ENCODE measurements at regions of chr2 and their contacts with region 1.

Region 1: GRCh38 chr2:38377050-38377828 is at the start of gene ATL2:
- DNase-seq: peak; percentile 98
- H3K4me3 Mint-ChIP-seq: peak within 1 kb of the TSS; percentile 92
- H3K27ac Mint-ChIP-seq: peak within 1 kb of the TSS; percentile 95
- H3K4me1 Mint-ChIP-seq: peaks cover 58% of the 10 kb centered on the region
- H3K27me3 Mint-ChIP-seq: no peaks in the 10 kb centered on the region
- total RNA-seq, gene ATL2: 58.1 and 67.3 TPM in 2 replicates

Region 2: DNA sequence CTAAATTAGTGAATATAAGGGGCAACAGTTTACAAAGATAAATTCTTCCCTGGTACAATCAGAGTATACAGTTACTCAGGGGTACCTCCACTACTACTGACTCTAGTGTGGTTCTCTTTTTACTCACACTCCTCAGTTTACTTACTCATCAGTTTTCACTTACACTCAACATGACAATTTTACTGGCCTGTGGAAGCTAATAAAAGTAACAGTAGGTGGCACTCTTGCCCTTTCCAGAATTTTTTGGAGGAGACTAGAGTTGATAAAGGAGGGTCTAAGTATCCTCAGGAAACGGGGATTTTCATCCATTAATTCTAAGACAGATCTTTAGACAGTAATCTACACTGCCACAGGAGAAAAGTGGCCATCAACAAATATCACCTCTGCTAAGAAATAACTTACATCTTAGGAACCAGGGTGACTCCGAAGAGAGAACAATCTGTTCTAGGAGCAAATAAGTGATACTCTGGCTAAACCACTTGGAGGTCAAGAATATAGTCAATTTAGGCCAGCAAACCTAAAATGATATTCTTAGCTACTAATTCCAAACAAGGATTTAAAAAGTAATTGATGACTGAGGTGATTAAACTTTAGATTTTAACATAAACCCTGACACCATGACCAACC is 61.4 kb before region 1 on chr2:
- intact Hi-C with region 1: loop called (anchors 5 kb)
- DNase-seq: peak; percentile 81
- H3K4me3 Mint-ChIP-seq: no peak overlapping the region
- H3K27ac Mint-ChIP-seq: no peak overlapping the region
- H3K4me1 Mint-ChIP-seq: peaks cover 13% of the 10 kb centered on the region
- H3K27me3 Mint-ChIP-seq: no peaks in the 10 kb centered on the region

Region 3: GRCh38 chr2:38394903-38395341 is 17.7 kb after region 1 on chr2:
- intact Hi-C with region 1: loop called (anchors 2 kb)
- DNase-seq: no peak
- H3K4me3 Mint-ChIP-seq: no peak overlapping the region
- H3K27ac Mint-ChIP-seq: no peak overlapping the region
- H3K4me1 Mint-ChIP-seq: peaks cover 12% of the 10 kb centered on the region
- H3K27me3 Mint-ChIP-seq: peaks cover 20% of the 10 kb centered on the region

Region 4: GRCh38 chr2:38462109-38462759 is 85.0 kb after region 1 on chr2:
- intact Hi-C with region 1: loop called (anchors 1 kb)
- DNase-seq: peak; percentile 70
- H3K4me3 Mint-ChIP-seq: peak overlapping the region; percentile 4
- H3K27ac Mint-ChIP-seq: peak overlapping the region; percentile 43
- H3K4me1 Mint-ChIP-seq: peaks cover 8% of the 10 kb centered on the region
- H3K27me3 Mint-ChIP-seq: peaks cover 24% of the 10 kb centered on the region

Region 5: DNA sequence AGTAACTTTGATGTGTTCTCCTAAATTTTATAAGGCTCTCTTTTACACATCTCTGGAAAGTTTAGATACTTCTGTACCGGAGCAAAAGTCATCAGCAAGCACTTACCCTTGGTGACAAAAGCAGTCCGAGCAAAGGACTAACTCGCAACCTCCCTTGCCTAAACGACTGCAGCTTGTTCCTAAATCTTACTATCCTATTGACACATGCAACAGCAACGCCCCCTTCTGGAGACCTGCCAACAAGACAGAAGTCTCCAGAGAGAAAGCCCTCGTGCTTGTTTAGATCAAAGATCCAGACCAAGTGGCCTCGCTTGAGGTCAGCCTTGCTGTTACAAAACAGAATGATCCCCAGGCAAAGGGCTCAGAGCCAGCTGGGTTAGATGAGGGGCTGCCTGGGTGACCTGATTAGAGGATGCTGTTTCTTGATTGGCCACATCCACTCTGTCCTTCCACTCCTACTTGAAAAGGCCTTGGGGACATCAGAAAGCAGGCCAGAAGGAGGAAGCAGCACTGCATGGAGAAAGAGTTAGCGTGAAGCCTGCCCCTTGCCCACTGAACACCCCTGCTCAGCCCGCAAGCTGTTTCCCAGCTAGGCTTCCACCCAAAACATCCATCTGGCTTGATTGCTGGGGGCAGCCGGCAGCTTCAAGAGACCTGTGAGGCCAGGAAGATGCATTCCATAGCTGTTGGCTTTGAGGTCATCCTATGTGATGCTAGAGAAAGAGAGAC is 131.2 kb after region 1 on chr2:
- intact Hi-C with region 1: loop called (anchors 5 kb)
- DNase-seq: peak; percentile 93
- H3K4me3 Mint-ChIP-seq: no peak overlapping the region
- H3K27ac Mint-ChIP-seq: no peak overlapping the region
- H3K4me1 Mint-ChIP-seq: peaks cover 8% of the 10 kb centered on the region
- H3K27me3 Mint-ChIP-seq: no peaks in the 10 kb centered on the region

Region 6: GRCh38 chr2:38750891-38751595 is 373.8 kb after region 1 on chr2 and contains the start of gene SRSF7:
- intact Hi-C with region 1: loop called (anchors 1 kb)
- DNase-seq: peak; percentile 99
- H3K4me3 Mint-ChIP-seq: peak within 1 kb of the TSS; percentile 91
- H3K27ac Mint-ChIP-seq: peak within 1 kb of the TSS; percentile 98
- H3K4me1 Mint-ChIP-seq: peaks cover 47% of the 10 kb centered on the region
- H3K27me3 Mint-ChIP-seq: peaks cover 2% of the 10 kb centered on the region
- total RNA-seq, gene SRSF7: 415 and 419 TPM in 2 replicates